ENCODE measurements at regions of chr6 and their contacts with region 1.

Region 1: GRCh38 chr6:137297887-137298286 is 78.7 kb upstream of the IFNGR1 start:
- DNase-seq: no peak
- ATAC-seq: no peak
- H3K4me3 ChIP-seq: no peak overlapping the region
- H3K27ac ChIP-seq: no peak overlapping the region
- H3K4me1 ChIP-seq: no peaks in the 10 kb centered on the region
- H3K27me3 ChIP-seq: no peaks in the 10 kb centered on the region
- CTCF ChIP-seq: no peak
- EP300 ChIP-seq: no peak
- POLR2A ChIP-seq: no peak
- RAD21 ChIP-seq: no peak

Region 2: DNA sequence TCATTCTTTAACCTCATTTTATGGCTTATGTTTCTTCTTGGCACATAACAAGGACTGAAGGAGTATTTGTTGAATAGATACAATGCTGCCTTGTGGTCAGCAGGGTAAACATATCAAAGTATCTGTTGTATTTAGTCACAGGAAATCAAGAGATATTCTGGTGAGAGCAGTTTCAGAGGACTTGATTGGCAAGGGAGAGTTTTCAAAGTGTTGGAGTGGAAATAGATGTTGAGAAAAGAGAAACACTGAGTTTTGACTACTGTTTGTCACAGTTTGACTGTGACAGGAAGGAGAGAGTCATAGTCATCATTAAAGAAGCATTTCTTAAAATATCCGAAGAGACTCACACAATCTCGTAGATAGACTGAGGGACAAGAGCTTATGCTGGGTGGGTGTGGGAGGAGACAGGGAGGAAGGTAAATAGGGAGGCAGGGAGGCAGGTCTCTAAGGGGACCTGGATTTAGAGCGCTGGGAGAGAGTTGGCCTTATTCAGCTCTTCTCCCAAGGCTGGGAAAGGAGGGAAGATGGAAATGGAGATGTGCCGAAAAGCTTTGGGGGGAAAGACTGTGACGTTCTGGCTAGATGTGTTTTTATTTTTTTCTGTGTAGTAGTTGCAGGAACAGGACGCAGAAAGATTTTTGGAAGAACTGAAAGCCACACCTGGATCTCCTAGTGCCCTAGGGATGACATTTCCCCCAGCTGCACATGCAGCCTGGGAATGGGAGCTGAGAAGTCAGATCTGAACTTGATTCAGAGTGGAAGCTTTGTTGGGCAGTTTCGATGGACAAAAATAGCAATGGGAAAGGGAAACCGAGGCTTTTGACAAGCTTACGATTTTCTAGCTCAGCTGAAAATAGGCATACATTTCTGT is 13.7 kb before region 1 on chr6:
- CTCF ChIA-PET with region 1: interaction called, 14 read pairs
- POLR2A ChIA-PET with region 1: interaction called, 6 read pairs
- RAD21 ChIA-PET with region 1: interaction called, 4 read pairs
- SMC1A ChIA-PET with region 1: interaction called, 30 read pairs
- in situ Hi-C with region 1: no loop called
- intact Hi-C with region 1: no loop called
- DNase-seq: peak; percentile 79
- ATAC-seq: peak; percentile 88
- H3K4me3 ChIP-seq: peak overlapping the region; percentile 45; the same call in 1 of the 2 replicates
- H3K27ac ChIP-seq: peak overlapping the region; percentile 76
- H3K4me1 ChIP-seq: peaks cover 25% of the 10 kb centered on the region
- H3K27me3 ChIP-seq: no peaks in the 10 kb centered on the region
- CTCF ChIP-seq: no peak
- EP300 ChIP-seq: peak; percentile 33 to 35; a peak in 2 of 4 replicates
- POLR2A ChIP-seq: no peak
- RAD21 ChIP-seq: no peak

Region 3: DNA sequence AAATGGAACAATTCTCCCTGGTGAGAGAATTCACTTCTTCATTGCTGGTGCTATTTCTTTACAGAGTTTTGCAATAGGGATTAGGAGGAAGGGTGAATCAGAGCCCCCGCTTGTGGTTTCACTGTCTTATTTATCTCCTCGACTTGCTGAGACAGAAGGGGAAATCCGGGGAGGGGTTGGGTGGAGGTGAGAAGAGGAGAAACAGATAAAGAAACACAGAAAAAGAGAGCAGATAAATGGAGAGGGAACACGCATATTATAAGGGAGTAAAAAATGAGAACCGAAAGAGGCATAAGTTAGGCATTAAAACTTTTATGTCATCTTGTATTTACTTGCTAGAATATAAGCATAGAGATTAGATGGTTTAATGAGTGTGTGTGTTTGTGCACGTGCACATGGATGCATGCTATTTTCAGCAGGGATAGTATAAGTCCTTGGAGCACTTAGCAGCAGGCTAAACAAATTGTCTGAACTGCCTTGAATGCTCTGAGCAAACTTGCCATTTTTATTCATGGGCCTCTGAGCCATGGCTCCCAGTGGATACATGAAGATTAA is 91.3 kb after region 1 on chr6:
- CTCF ChIA-PET with region 1: no interaction called
- POLR2A ChIA-PET with region 1: no interaction called
- RAD21 ChIA-PET with region 1: no interaction called
- SMC1A ChIA-PET with region 1: no interaction called
- in situ Hi-C with region 1: no loop called
- intact Hi-C with region 1: no loop called
- DNase-seq: peak; percentile 51
- ATAC-seq: peak; percentile 95
- H3K4me3 ChIP-seq: no peak overlapping the region
- H3K27ac ChIP-seq: no peak overlapping the region
- H3K4me1 ChIP-seq: peaks cover 18% of the 10 kb centered on the region
- H3K27me3 ChIP-seq: no peaks in the 10 kb centered on the region
- CTCF ChIP-seq: peak in 1 of 3 experiments; percentile 9; a peak in 1 of 6 replicates
- EP300 ChIP-seq: peak in 1 of 2 experiments; percentile 20; a peak in 1 of 4 replicates
- POLR2A ChIP-seq: no peak
- RAD21 ChIP-seq: no peak

Region 4: GRCh38 chr6:138773177-138774091 is 1475.5 kb after region 1 on chr6 and contains the start of gene CCDC28A:
- CTCF ChIA-PET with region 1: no interaction called
- POLR2A ChIA-PET with region 1: no interaction called
- RAD21 ChIA-PET with region 1: no interaction called
- SMC1A ChIA-PET with region 1: no interaction called
- in situ Hi-C with region 1: no loop called
- intact Hi-C with region 1: no loop called
- DNase-seq: peak; percentile 93
- ATAC-seq: peak; percentile 94
- H3K4me3 ChIP-seq: peak within 1 kb of the TSS; percentile 89
- H3K27ac ChIP-seq: peak within 1 kb of the TSS; percentile 97
- H3K4me1 ChIP-seq: peaks cover 12% of the 10 kb centered on the region
- H3K27me3 ChIP-seq: no peaks in the 10 kb centered on the region
- CTCF ChIP-seq: no peak
- EP300 ChIP-seq: no peak; a peak in 1 of 4 replicates
- POLR2A ChIP-seq: peak; percentile 79
- RAD21 ChIP-seq: no peak
- polyA plus RNA-seq, gene CCDC28A: 19.6 to 20.5 TPM

Measured in GM12878 (cell line).